Right ventricle myocardium inferior (tissue), 1 donor: ENCODE measurements at regions of chr17 and their contacts with region 1.

Region 1: DNA sequence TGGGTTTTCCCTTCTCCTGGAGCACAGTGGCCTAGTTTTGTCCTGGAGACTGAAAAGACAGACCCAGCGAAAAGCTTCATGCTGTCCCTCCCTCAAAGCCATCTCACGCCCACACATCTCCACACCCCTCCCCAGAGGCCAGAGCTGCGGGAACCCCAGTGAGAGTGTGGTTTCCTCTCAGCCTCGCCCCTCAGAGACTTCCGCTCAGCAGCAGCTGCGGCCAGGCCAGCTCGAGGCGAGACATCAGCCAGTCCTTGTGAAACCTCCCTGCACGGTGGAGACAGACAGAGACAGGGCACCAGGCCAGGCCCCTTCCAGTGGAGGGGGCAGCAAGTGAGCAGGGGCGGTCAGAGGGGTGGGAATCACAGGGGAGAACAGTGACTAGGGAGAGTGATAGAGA is 77.0 kb upstream of the TNRC6C start:
- DNase-seq: peak; percentile 97
- ATAC-seq: peak; percentile 92

Region 2: GRCh38 chr17:77772461-77772897 is 109.1 kb before region 1 on chr17:
- intact Hi-C with region 1: loop called (anchors 5 kb)
- DNase-seq: peak; percentile 83
- ATAC-seq: peak; percentile 91

Region 3: DNA sequence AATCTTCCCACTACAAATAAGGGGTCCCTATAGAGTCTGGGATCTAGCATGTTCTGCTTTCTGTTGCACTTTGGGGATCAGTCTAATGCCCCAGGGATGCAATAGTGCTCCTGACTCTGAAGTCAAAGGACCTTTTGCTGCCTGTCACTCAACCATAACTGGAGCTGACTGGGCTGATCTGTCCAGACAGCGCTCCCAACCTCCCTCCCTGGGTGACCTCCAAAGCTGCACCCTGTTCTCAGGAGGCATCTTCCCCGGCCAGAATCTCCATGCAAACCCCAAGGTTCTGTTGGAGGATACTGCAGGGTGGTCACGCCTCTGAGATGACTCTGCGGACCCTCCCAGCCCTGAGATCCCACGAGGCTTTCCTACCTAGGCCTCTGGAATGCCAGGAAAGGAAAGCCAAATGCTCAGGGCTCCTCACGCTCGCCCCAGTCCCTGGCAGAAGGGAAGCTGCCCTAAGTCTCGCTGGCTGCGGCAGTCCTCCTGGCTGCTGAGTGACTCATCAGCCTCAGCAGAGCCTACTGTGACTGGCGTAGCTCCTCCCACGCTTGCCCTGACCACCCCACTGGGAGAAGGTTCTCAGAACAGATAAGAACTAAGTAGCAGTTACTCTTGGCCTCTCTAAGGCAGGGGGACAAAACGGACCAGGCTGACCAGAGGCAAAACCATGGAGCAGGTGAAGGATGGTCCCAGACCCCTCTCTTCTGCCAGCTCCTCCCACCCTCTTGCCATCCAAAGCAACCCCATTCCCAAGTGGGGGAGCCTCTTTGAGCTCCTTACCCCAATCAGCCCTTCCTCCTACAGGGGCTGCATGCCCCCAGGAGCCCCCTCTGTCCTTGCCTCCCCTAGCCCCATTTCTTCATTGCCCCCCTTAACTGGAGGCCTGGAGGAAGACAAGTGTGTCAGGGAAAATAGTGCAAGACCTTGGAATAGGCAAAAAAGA is 47.1 kb before region 1 on chr17:
- intact Hi-C with region 1: loop called (anchors 2 kb)
- DNase-seq: no peak
- ATAC-seq: peak; percentile 43

Region 4: GRCh38 chr17:78517421-78517820 is 635.9 kb after region 1 on chr17:
- intact Hi-C with region 1: no loop called
- DNase-seq: no peak
- ATAC-seq: peak; percentile 87